ENCODE measurements at regions of chr5 and their contacts with region 1.

Region 1: DNA sequence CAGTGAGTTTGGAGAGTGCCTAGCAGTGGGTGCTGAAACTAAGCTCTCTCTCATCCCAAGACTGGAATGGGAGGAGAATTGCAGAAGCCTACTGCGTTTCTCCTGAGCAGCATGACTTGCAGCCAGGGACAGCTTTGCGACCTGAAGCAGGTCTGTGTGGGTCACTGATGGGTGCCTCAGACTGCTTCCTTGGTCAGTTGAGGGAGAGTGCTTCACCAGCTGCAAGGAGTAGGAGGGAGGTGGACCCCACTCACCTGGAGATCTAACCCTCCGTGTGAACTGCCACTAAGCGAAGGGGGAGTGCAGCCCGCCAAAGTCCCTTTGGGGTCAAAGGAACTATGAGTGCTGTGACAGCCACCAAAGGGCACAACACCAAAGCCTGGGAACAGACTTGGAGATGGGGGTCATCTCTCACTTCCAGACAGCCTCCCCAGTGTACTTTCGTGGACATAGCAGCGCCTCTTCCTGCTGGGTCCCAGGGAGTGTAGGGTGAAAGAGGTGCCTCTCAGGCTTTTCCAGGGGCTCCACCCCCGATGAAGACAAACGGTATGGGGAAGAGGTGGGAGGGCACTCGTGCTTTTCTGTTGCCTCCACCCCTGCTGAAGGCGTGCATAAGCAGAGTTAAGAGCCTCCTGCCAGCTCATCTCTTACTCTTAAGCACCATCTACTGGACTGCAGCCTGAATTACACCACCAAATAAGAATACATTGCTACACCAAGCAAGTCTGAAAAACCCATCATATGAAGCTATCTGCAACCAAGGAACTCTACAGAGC is 34.3 kb upstream of the MACIR start:
- DNase-seq: peak; percentile 78
- H3K4me3 ChIP-seq: no peak overlapping the region
- H3K27ac ChIP-seq: no peak overlapping the region
- H3K4me1 ChIP-seq: no peaks in the 10 kb centered on the region
- H3K27me3 ChIP-seq: no peaks in the 10 kb centered on the region
- CTCF ChIP-seq: peak; percentile 69 to 71
- POLR2A ChIP-seq: no peak

Region 2: GRCh38 chr5:102536323-102536928 is 687.9 kb before region 1 on chr5:
- CTCF ChIA-PET with region 1: interaction called, 45 read pairs
- POLR2A ChIA-PET with region 1: no interaction called
- dilution Hi-C with region 1: no loop called
- intact Hi-C with region 1: loop called (anchors 1 kb)
- DNase-seq: peak; percentile 27
- H3K4me3 ChIP-seq: no peak overlapping the region
- H3K27ac ChIP-seq: no peak overlapping the region
- H3K4me1 ChIP-seq: no peaks in the 10 kb centered on the region
- H3K27me3 ChIP-seq: peaks cover 0 to 3% of the 10 kb centered on the region in 2 experiments
- CTCF ChIP-seq: peak in 1 of 2 donors; percentile 18
- POLR2A ChIP-seq: no peak

Region 3: GRCh38 chr5:102778478-102778877 is 445.8 kb before region 1 on chr5:
- CTCF ChIA-PET with region 1: interaction called, 8 read pairs
- POLR2A ChIA-PET with region 1: no interaction called
- dilution Hi-C with region 1: no loop called
- intact Hi-C with region 1: loop called (anchors 1 kb)
- DNase-seq: peak; percentile 87
- H3K4me3 ChIP-seq: no peak overlapping the region
- H3K27ac ChIP-seq: peak overlapping the region; percentile 11
- H3K4me1 ChIP-seq: peaks cover 21% of the 10 kb centered on the region
- H3K27me3 ChIP-seq: no peaks in the 10 kb centered on the region
- CTCF ChIP-seq: no peak
- POLR2A ChIP-seq: no peak

Region 4: DNA sequence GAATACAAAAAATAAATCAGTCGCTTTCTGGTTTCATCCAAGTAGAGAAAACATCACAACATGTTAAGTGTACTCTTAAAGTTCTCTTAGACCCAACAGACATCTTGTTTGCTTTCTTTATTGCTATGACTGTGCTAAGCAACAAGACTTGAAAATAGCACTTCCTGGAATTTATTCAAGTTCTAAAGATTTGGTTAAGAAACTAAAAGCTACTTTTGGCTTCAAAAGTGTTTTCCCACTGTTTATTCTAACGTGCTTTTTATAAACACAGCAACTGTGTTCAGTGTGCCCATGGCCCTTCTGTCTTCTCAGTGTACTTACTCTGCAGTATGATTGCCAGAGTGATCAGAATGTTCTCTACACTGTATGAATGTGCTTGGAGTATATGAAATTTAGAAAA is 214.1 kb before region 1 on chr5:
- CTCF ChIA-PET with region 1: no interaction called
- POLR2A ChIA-PET with region 1: no interaction called
- dilution Hi-C with region 1: no loop called
- intact Hi-C with region 1: no loop called
- DNase-seq: no peak
- H3K4me3 ChIP-seq: no peak overlapping the region
- H3K27ac ChIP-seq: no peak overlapping the region
- H3K4me1 ChIP-seq: no peaks in the 10 kb centered on the region
- H3K27me3 ChIP-seq: no peaks in the 10 kb centered on the region
- CTCF ChIP-seq: no peak
- POLR2A ChIP-seq: no peak

Region 5: GRCh38 chr5:103119765-103120606 is 104.3 kb before region 1 on chr5 and contains the starts of genes GIN1 and PPIP5K2:
- CTCF ChIA-PET with region 1: interaction called, 18 read pairs
- POLR2A ChIA-PET with region 1: interaction called, 5 read pairs
- dilution Hi-C with region 1: no loop called
- intact Hi-C with region 1: loop called (anchors 1 kb)
- DNase-seq: peak; percentile 99
- H3K4me3 ChIP-seq: peak within 1 kb of the TSS; percentile 63 to 92 (median 92)
- H3K27ac ChIP-seq: peak within 1 kb of the TSS; percentile 93
- H3K4me1 ChIP-seq: peaks cover 19% of the 10 kb centered on the region
- H3K27me3 ChIP-seq: no peaks in the 10 kb centered on the region
- CTCF ChIP-seq: no peak
- POLR2A ChIP-seq: peak; percentile 50
- total RNA-seq, gene GIN1: 4.4 and 6.7 TPM in 2 replicates
- total RNA-seq, gene PPIP5K2: 53.5 and 69.4 TPM in 2 replicates

Region 6: GRCh38 chr5:103166706-103167105 is 57.6 kb before region 1 on chr5:
- CTCF ChIA-PET with region 1: interaction called, 10 read pairs
- POLR2A ChIA-PET with region 1: no interaction called
- dilution Hi-C with region 1: no loop called
- intact Hi-C with region 1: no loop called
- DNase-seq: no peak
- H3K4me3 ChIP-seq: no peak overlapping the region
- H3K27ac ChIP-seq: no peak overlapping the region
- H3K4me1 ChIP-seq: no peaks in the 10 kb centered on the region
- H3K27me3 ChIP-seq: no peaks in the 10 kb centered on the region
- CTCF ChIP-seq: no peak
- POLR2A ChIP-seq: no peak

Region 7: GRCh38 chr5:103207653-103208052 is 16.7 kb before region 1 on chr5:
- CTCF ChIA-PET with region 1: interaction called, 40 read pairs
- POLR2A ChIA-PET with region 1: no interaction called
- dilution Hi-C with region 1: no loop called
- intact Hi-C with region 1: no loop called
- DNase-seq: peak; percentile 83
- H3K4me3 ChIP-seq: no peak overlapping the region
- H3K27ac ChIP-seq: peak overlapping the region; percentile 36
- H3K4me1 ChIP-seq: peaks cover 27% of the 10 kb centered on the region
- H3K27me3 ChIP-seq: no peaks in the 10 kb centered on the region
- CTCF ChIP-seq: no peak
- POLR2A ChIP-seq: no peak

Region 8: GRCh38 chr5:103487218-103487617 is 262.9 kb after region 1 on chr5:
- CTCF ChIA-PET with region 1: interaction called, 16 read pairs
- POLR2A ChIA-PET with region 1: no interaction called
- dilution Hi-C with region 1: no loop called
- intact Hi-C with region 1: no loop called
- DNase-seq: no peak
- H3K4me3 ChIP-seq: no peak overlapping the region
- H3K27ac ChIP-seq: no peak overlapping the region
- H3K4me1 ChIP-seq: no peaks in the 10 kb centered on the region
- H3K27me3 ChIP-seq: peaks cover 1 to 4% of the 10 kb centered on the region in 2 experiments
- CTCF ChIP-seq: no peak
- POLR2A ChIP-seq: no peak

Measured in endothelial cell of umbilical vein (primary cell).